H1 (cell line): ENCODE measurements at regions of chr9 and their contacts with region 1.

Region 1: DNA sequence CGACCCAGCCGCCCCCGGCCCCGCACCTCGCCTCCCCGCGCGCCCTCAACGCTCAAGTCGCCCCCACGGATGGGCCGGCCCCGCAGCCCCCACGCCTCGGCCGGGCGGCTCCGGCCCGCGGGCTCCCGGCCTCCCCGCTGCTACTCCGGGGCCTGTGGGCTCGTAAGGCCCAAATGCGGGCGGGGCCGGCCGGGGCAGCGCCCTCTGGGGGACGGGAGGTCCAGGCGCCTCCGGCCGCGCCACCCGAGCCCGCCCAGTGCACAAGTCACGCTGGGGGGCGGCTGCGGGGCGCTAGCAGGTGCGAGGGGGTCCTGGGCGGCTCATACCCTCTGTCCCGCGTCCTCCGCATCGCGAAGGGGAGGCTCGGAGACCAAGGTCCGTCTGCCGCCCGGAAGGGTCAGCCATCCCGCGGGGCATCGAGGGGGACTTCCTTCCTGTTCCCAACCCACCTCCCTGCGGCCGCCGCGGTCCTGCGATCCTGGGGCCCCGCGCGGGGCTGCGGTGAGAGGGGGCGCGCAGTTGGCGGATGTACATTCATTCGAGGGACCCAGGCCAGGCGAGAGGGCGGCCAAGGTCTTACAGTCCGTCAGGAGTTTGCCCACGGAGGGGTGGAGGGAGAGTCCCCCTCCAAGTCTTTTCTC is at the start of gene CIZ1:
- DNase-seq: peak in 1 of 2 experiments; percentile 84
- H3K4me3 ChIP-seq: peak within 1 kb of the TSS; percentile 64 to 99 (median 77)
- H3K27ac ChIP-seq: no peak within 1 kb of the TSS; the same call in 1 of the 2 replicates
- H3K4me1 ChIP-seq: peaks cover 0 to 11% (median 4%) of the 10 kb centered on the region in 4 experiments; a peak in 4 of 7 replicates
- H3K27me3 ChIP-seq: no peaks in the 10 kb centered on the region
- CTCF ChIP-seq: peak; percentile 79 to 86 (median 80)
- EP300 ChIP-seq: no peak
- POLR2A ChIP-seq: peak in 1 of 2 experiments; percentile 44; a peak in 1 of 3 replicates
- RAD21 ChIP-seq: peak in 1 of 2 experiments; percentile 15; a peak in 1 of 4 replicates
- total RNA-seq, gene CIZ1: 103 and 107 TPM in 2 replicates

Region 2: DNA sequence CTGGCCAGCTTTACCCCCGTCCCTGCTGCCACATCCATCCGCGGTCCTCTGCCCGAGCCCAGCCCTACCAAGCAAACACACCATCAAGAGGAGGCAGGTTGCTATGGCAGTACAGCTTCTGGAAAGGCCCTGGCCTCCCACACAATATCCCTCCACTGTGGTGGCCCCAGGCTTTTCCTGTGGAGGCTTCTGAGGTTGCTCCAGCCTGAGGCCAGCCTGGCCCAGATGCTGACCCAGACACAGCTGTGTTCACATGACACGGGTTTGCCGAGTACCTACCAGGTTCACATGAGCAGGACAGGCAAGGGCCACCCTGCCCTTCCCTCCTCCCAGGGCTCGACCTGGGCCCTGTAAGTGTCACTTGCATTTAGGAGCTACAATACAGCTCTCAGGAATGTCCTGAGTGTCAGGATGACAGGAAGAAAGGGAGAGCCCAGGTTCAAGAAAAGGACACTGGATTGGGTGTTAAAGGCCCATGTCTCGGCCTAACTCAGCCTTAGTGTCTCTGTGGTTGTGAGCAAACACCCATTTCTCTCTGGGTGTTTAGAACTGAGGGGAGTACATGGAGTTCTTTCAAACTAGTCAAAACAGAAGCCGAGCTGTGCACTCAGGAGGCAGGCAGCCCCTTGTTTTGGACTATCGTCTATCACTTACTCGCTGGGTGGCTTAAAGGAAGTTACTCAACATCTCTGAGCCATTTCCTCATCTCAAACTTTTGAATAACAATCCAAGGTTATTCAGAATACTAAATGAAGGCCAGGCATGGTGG is 164.6 kb before region 1 on chr9:
- CTCF ChIA-PET with region 1: no interaction called
- POLR2A ChIA-PET with region 1: no interaction called
- DNase-seq: no peak
- H3K4me3 ChIP-seq: no peak overlapping the region
- H3K27ac ChIP-seq: no peak overlapping the region
- H3K4me1 ChIP-seq: no peaks in the 10 kb centered on the region
- H3K27me3 ChIP-seq: no peaks in the 10 kb centered on the region
- CTCF ChIP-seq: no peak
- EP300 ChIP-seq: no peak
- POLR2A ChIP-seq: no peak
- RAD21 ChIP-seq: no peak

Region 3: GRCh38 chr9:128175102-128175563 is 16.4 kb before region 1 on chr9:
- CTCF ChIA-PET with region 1: interaction called, 16 read pairs
- POLR2A ChIA-PET with region 1: interaction called, 11 read pairs
- DNase-seq: no peak
- H3K4me3 ChIP-seq: no peak overlapping the region
- H3K27ac ChIP-seq: no peak overlapping the region
- H3K4me1 ChIP-seq: peaks cover 0 to 2% (median 0%) of the 10 kb centered on the region in 4 experiments; a peak in 1 of 7 replicates
- H3K27me3 ChIP-seq: no peaks in the 10 kb centered on the region
- CTCF ChIP-seq: no peak
- EP300 ChIP-seq: no peak
- POLR2A ChIP-seq: no peak
- RAD21 ChIP-seq: no peak

Region 4: GRCh38 chr9:128201441-128202369 is 10.2 kb after region 1 on chr9:
- CTCF ChIA-PET with region 1: interaction called, 7 read pairs
- POLR2A ChIA-PET with region 1: interaction called, 13 read pairs
- DNase-seq: no peak
- H3K4me3 ChIP-seq: no peak overlapping the region
- H3K27ac ChIP-seq: no peak overlapping the region
- H3K4me1 ChIP-seq: peaks cover 3 to 11% (median 9%) of the 10 kb centered on the region in 4 experiments; a peak in 6 of 7 replicates
- H3K27me3 ChIP-seq: no peaks in the 10 kb centered on the region
- CTCF ChIP-seq: no peak
- EP300 ChIP-seq: no peak
- POLR2A ChIP-seq: no peak
- RAD21 ChIP-seq: no peak